CD4-positive, alpha-beta memory T cell (primary cell): ENCODE measurements at regions of chr1 and their contacts with region 1.

Region 1: GRCh38 chr1:161225534-161226319 is at the start of gene TOMM40L:
- DNase-seq: peak; percentile 85 to 97 (median 95)
- H3K4me3 ChIP-seq: peak within 1 kb of the TSS; percentile 67 to 91
- H3K4me3 Mint-ChIP-seq: peak within 1 kb of the TSS; percentile 96 to 100 (median 98)
- H3K27ac ChIP-seq: peak within 1 kb of the TSS; percentile 63
- H3K27ac Mint-ChIP-seq: peak within 1 kb of the TSS; percentile 89 to 98 (median 97)
- H3K4me1 ChIP-seq: peaks cover 28% of the 10 kb centered on the region
- H3K4me1 Mint-ChIP-seq: peaks cover 20 to 37% (median 29%) of the 10 kb centered on the region in 4 donors
- H3K27me3 ChIP-seq: no peaks in the 10 kb centered on the region
- H3K27me3 Mint-ChIP-seq: no peaks in the 10 kb centered on the region
- total RNA-seq, gene TOMM40L: 8.2 to 8.8 TPM

Region 2: GRCh38 chr1:161145832-161146231 is 79.9 kb before region 1 on chr1:
- CTCF ChIA-PET with region 1: no interaction called
- POLR2A ChIA-PET with region 1: no interaction called
- intact Hi-C with region 1: no loop called
- DNase-seq: no peak
- H3K4me3 ChIP-seq: no peak overlapping the region
- H3K4me3 Mint-ChIP-seq: no peak overlapping the region
- H3K27ac ChIP-seq: no peak overlapping the region
- H3K27ac Mint-ChIP-seq: no peak overlapping the region
- H3K4me1 ChIP-seq: no peaks in the 10 kb centered on the region
- H3K4me1 Mint-ChIP-seq: no peaks in the 10 kb centered on the region
- H3K27me3 ChIP-seq: no peaks in the 10 kb centered on the region
- H3K27me3 Mint-ChIP-seq: no peaks in the 10 kb centered on the region

Region 3: GRCh38 chr1:161165742-161166668 is 59.7 kb before region 1 on chr1 and contains the start of gene PPOX:
- CTCF ChIA-PET with region 1: interaction called, 52 read pairs
- POLR2A ChIA-PET with region 1: interaction called, 51 read pairs
- intact Hi-C with region 1: loop called (anchors 1 kb)
- DNase-seq: peak; percentile 95 to 98 (median 96)
- H3K4me3 ChIP-seq: peak within 1 kb of the TSS; percentile 73 to 77
- H3K4me3 Mint-ChIP-seq: peak within 1 kb of the TSS; percentile 89 to 96 (median 94)
- H3K27ac ChIP-seq: peak within 1 kb of the TSS; percentile 83
- H3K27ac Mint-ChIP-seq: peak within 1 kb of the TSS; percentile 96 to 100 (median 100)
- H3K4me1 ChIP-seq: peaks cover 37% of the 10 kb centered on the region
- H3K4me1 Mint-ChIP-seq: peaks cover 25 to 75% (median 45%) of the 10 kb centered on the region in 4 donors
- H3K27me3 ChIP-seq: no peaks in the 10 kb centered on the region
- H3K27me3 Mint-ChIP-seq: no peaks in the 10 kb centered on the region
- total RNA-seq, gene PPOX: 59.4 to 69.8 TPM

Region 4: GRCh38 chr1:161185282-161185682 is 40.4 kb before region 1 on chr1:
- CTCF ChIA-PET with region 1: interaction called, 131 read pairs
- POLR2A ChIA-PET with region 1: interaction called, 54 read pairs
- intact Hi-C with region 1: loop called (anchors 1 kb)
- DNase-seq: peak; percentile 86 to 92 (median 88)
- H3K4me3 ChIP-seq: peak overlapping the region; percentile 8 to 25
- H3K4me3 Mint-ChIP-seq: peak overlapping the region; percentile 73 to 89 (median 83)
- H3K27ac ChIP-seq: peak overlapping the region; percentile 47
- H3K27ac Mint-ChIP-seq: peak overlapping the region; percentile 86 to 96 (median 92)
- H3K4me1 ChIP-seq: peaks cover 94% of the 10 kb centered on the region
- H3K4me1 Mint-ChIP-seq: peaks cover 57 to 88% (median 78%) of the 10 kb centered on the region in 4 donors
- H3K27me3 ChIP-seq: no peaks in the 10 kb centered on the region
- H3K27me3 Mint-ChIP-seq: no peaks in the 10 kb centered on the region

Region 5: DNA sequence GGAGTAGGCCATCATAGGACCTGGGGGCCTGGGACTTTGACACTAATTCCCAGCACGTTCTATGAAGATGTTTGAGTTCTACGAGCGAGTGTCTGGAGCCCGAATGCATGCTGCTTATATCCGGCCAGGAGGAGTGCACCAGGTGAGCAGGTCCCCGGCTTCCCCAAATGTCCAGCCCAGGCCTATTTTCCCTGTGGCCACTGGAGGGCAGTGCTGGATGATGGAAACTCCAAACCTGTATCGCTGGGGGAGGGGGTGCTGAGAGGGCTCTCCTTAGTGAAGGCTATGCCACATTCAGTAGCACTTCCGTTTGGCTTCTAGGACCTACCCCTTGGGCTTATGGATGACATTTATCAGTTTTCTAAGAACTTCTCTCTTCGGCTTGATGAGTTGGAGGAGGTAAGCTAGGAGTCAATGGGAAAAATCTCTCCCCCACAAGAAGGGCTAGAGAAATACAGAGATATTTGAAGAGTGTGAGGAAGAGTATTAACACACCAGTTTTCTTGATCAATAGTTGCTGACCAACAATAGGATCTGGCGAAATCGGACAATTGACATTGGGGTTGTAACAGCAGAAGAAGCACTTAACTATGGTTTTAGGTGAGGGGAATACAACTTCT is 15.8 kb before region 1 on chr1:
- CTCF ChIA-PET with region 1: interaction called, 103 read pairs
- POLR2A ChIA-PET with region 1: interaction called, 112 read pairs
- intact Hi-C with region 1: loop called (anchors 1 kb)
- DNase-seq: peak; percentile 64 to 74 (median 68)
- H3K4me3 ChIP-seq: no peak overlapping the region
- H3K4me3 Mint-ChIP-seq: no peak overlapping the region
- H3K27ac ChIP-seq: no peak overlapping the region
- H3K27ac Mint-ChIP-seq: peak overlapping the region; percentile 57 to 88 (median 68)
- H3K4me1 ChIP-seq: peaks cover 25% of the 10 kb centered on the region
- H3K4me1 Mint-ChIP-seq: peaks cover 20 to 38% (median 27%) of the 10 kb centered on the region in 4 donors
- H3K27me3 ChIP-seq: no peaks in the 10 kb centered on the region
- H3K27me3 Mint-ChIP-seq: no peaks in the 10 kb centered on the region

Region 6: GRCh38 chr1:161314201-161314981 is 88.7 kb after region 1 on chr1 and contains the start of gene SDHC:
- CTCF ChIA-PET with region 1: interaction called, 15 read pairs
- POLR2A ChIA-PET with region 1: interaction called, 14 read pairs
- intact Hi-C with region 1: loop called (anchors 2 kb)
- DNase-seq: peak; percentile 91 to 94 (median 92)
- H3K4me3 ChIP-seq: peak within 1 kb of the TSS; percentile 91 to 94
- H3K4me3 Mint-ChIP-seq: peak within 1 kb of the TSS; percentile 95 to 99 (median 98)
- H3K27ac ChIP-seq: peak within 1 kb of the TSS; percentile 98
- H3K27ac Mint-ChIP-seq: peak within 1 kb of the TSS; percentile 97 to 100 (median 99)
- H3K4me1 ChIP-seq: peaks cover 16% of the 10 kb centered on the region
- H3K4me1 Mint-ChIP-seq: peaks cover 15 to 38% (median 22%) of the 10 kb centered on the region in 4 donors
- H3K27me3 ChIP-seq: no peaks in the 10 kb centered on the region
- H3K27me3 Mint-ChIP-seq: no peaks in the 10 kb centered on the region
- total RNA-seq, gene SDHC: 106 to 108 TPM

Region 7: DNA sequence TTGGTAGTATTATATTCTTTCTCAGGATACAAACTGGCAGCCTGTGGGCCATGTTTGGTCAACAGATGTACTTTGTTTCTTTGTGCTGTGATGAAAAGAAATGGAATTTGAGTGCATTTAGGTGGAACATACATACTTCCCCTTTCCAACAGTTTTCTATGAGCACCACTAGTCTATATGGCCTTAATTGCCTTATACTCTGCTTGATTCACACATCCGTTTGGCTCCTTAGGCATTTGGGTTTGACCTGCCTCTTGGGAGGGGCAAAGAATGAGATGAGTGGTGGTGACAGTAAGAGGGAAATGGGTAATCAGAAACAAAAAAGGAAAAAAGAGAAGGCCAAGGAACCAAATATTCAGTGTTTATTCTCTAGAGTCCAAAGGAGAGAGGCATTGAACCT is 124.9 kb after region 1 on chr1:
- CTCF ChIA-PET with region 1: no interaction called
- POLR2A ChIA-PET with region 1: no interaction called
- intact Hi-C with region 1: no loop called
- DNase-seq: no peak
- H3K4me3 ChIP-seq: no peak overlapping the region
- H3K4me3 Mint-ChIP-seq: no peak overlapping the region
- H3K27ac ChIP-seq: no peak overlapping the region
- H3K27ac Mint-ChIP-seq: no peak overlapping the region
- H3K4me1 ChIP-seq: no peaks in the 10 kb centered on the region
- H3K4me1 Mint-ChIP-seq: peaks cover 0 to 5% (median 0%) of the 10 kb centered on the region in 4 donors
- H3K27me3 ChIP-seq: no peaks in the 10 kb centered on the region
- H3K27me3 Mint-ChIP-seq: no peaks in the 10 kb centered on the region

Region 8: GRCh38 chr1:161389691-161390558 is 164.2 kb after region 1 on chr1:
- CTCF ChIA-PET with region 1: interaction called, 245 read pairs
- POLR2A ChIA-PET with region 1: interaction called, 16 read pairs
- intact Hi-C with region 1: no loop called
- DNase-seq: peak; percentile 91 to 96 (median 92)
- H3K4me3 ChIP-seq: peak overlapping the region; percentile 79 to 86
- H3K4me3 Mint-ChIP-seq: peak overlapping the region; percentile 84 to 95 (median 94)
- H3K27ac ChIP-seq: peak overlapping the region; percentile 87
- H3K27ac Mint-ChIP-seq: peak overlapping the region; percentile 94 to 99 (median 97)
- H3K4me1 ChIP-seq: peaks cover 29% of the 10 kb centered on the region
- H3K4me1 Mint-ChIP-seq: peaks cover 12 to 48% (median 33%) of the 10 kb centered on the region in 4 donors
- H3K27me3 ChIP-seq: no peaks in the 10 kb centered on the region
- H3K27me3 Mint-ChIP-seq: no peaks in the 10 kb centered on the region